SK-N-SH (cell line): ENCODE measurements at regions of chr18 and their contacts with region 1.

Region 1: GRCh38 chr18:8478166-8478967 is 130.9 kb upstream of the RAB12 start:
- DNase-seq: peak; percentile 77
- H3K4me3 ChIP-seq: no peak overlapping the region
- H3K27ac ChIP-seq: no peak overlapping the region
- H3K4me1 ChIP-seq: peaks cover 0 to 6% of the 10 kb centered on the region in 2 experiments; a peak in 1 of 4 replicates
- H3K27me3 ChIP-seq: no peaks in the 10 kb centered on the region
- CTCF ChIP-seq: peak; percentile 72
- EP300 ChIP-seq: no peak
- RAD21 ChIP-seq: peak; percentile 50

Region 2: GRCh38 chr18:7592305-7593071 is 885.9 kb before region 1 on chr18:
- CTCF ChIA-PET with region 1: interaction called, 13 read pairs
- POLR2A ChIA-PET with region 1: no interaction called
- DNase-seq: peak; percentile 36
- H3K4me3 ChIP-seq: no peak overlapping the region
- H3K27ac ChIP-seq: peak overlapping the region in 1 of 2 experiments; percentile 95; a peak in 2 of 4 replicates
- H3K4me1 ChIP-seq: peaks cover 0 to 27% of the 10 kb centered on the region in 2 experiments; a peak in 2 of 4 replicates
- H3K27me3 ChIP-seq: no peaks in the 10 kb centered on the region
- CTCF ChIP-seq: no peak
- EP300 ChIP-seq: no peak
- RAD21 ChIP-seq: peak; percentile 44

Region 3: GRCh38 chr18:8260827-8261226 is 217.5 kb before region 1 on chr18:
- CTCF ChIA-PET with region 1: interaction called, 16 read pairs
- POLR2A ChIA-PET with region 1: no interaction called
- DNase-seq: no peak
- H3K4me3 ChIP-seq: no peak overlapping the region
- H3K27ac ChIP-seq: peak overlapping the region in 1 of 2 experiments; percentile 91; a peak in 2 of 4 replicates
- H3K4me1 ChIP-seq: peaks cover 0 to 71% of the 10 kb centered on the region in 2 experiments; a peak in 2 of 4 replicates
- H3K27me3 ChIP-seq: no peaks in the 10 kb centered on the region
- CTCF ChIP-seq: no peak
- EP300 ChIP-seq: no peak
- RAD21 ChIP-seq: no peak

Region 4: DNA sequence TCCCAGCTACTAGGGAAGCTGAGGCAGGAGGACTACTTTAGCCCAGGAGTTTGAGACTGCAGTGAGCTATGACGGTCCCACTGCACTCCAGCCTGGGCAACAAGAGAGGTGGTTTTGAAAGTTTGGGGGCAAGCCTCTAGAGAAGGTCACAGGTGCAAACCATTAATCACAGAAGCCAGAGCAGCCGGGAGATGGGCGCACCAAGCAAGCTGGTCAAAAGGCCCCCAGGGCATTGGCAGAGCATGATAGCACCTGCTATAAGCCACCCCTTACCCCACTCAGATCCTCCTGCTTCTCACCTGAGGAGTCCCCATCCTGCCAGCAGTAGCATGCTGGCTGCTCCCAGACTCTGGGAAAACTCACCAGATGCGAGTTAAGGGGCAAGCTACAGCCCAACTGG is 14.8 kb after region 1 on chr18:
- CTCF ChIA-PET with region 1: interaction called, 16 read pairs
- POLR2A ChIA-PET with region 1: no interaction called
- DNase-seq: no peak
- H3K4me3 ChIP-seq: no peak overlapping the region
- H3K27ac ChIP-seq: no peak overlapping the region
- H3K4me1 ChIP-seq: peaks cover 0 to 4% of the 10 kb centered on the region in 2 experiments; a peak in 1 of 4 replicates
- H3K27me3 ChIP-seq: no peaks in the 10 kb centered on the region
- CTCF ChIP-seq: no peak
- EP300 ChIP-seq: no peak
- RAD21 ChIP-seq: no peak